ENCODE measurements at regions of chr1 and their contacts with region 1.

Region 1: GRCh38 chr1:8348777-8349491 is 31.0 kb downstream of the SLC45A1 start:
- DNase-seq: peak; percentile 27 to 83 (median 67)
- ATAC-seq: peak; percentile 62 to 81 (median 76)
- H3K4me3 ChIP-seq: no peak overlapping the region
- H3K4me3 Mint-ChIP-seq: no peak overlapping the region
- H3K27ac ChIP-seq: no peak overlapping the region
- H3K27ac Mint-ChIP-seq: no peak overlapping the region
- H3K4me1 ChIP-seq: peaks cover 0 to 5% of the 10 kb centered on the region in 2 experiments
- H3K4me1 Mint-ChIP-seq: peaks cover 4 to 7% (median 4%) of the 10 kb centered on the region in 3 donors
- H3K27me3 ChIP-seq: peaks cover 0 to 11% of the 10 kb centered on the region in 2 experiments
- H3K27me3 Mint-ChIP-seq: peaks cover 0 to 3% of the 10 kb centered on the region in 2 donors

Region 2: GRCh38 chr1:8015036-8015808 is 333.7 kb before region 1 on chr1:
- CTCF ChIA-PET with region 1: interaction called, 4 to 14 read pairs
- POLR2A ChIA-PET with region 1: no interaction called
- DNase-seq: peak in 22 of 35 experiments; percentile 12 to 74 (median 32)
- ATAC-seq: peak; percentile 55 to 65 (median 62)
- H3K4me3 ChIP-seq: no peak overlapping the region
- H3K4me3 Mint-ChIP-seq: no peak overlapping the region
- H3K27ac ChIP-seq: no peak overlapping the region
- H3K27ac Mint-ChIP-seq: no peak overlapping the region
- H3K4me1 ChIP-seq: no peaks in the 10 kb centered on the region
- H3K4me1 Mint-ChIP-seq: peaks cover 0 to 7% (median 2%) of the 10 kb centered on the region in 3 donors
- H3K27me3 ChIP-seq: peaks cover 3 to 9% of the 10 kb centered on the region in 2 experiments
- H3K27me3 Mint-ChIP-seq: peaks cover 13 to 25% of the 10 kb centered on the region in 2 donors

Measured in T-cell (primary cell).